CD8-positive, alpha-beta T cell (primary cell): ENCODE measurements at regions of chr20 and their contacts with region 1.

Region 1: GRCh38 chr20:41738604-41739206 is 120.5 kb upstream of the CHD6 start:
- DNase-seq: peak in 5 of 9 experiments; percentile 11 to 39 (median 28)
- ATAC-seq: no peak
- H3K4me3 ChIP-seq: no peak overlapping the region
- H3K4me3 Mint-ChIP-seq: no peak overlapping the region
- H3K27ac ChIP-seq: no peak overlapping the region
- H3K27ac Mint-ChIP-seq: no peak overlapping the region
- H3K4me1 ChIP-seq: no peaks in the 10 kb centered on the region
- H3K4me1 Mint-ChIP-seq: peaks cover 2% of the 10 kb centered on the region
- H3K27me3 ChIP-seq: no peaks in the 10 kb centered on the region
- H3K27me3 Mint-ChIP-seq: no peaks in the 10 kb centered on the region
- CTCF ChIP-seq: peak; percentile 54

Region 2: DNA sequence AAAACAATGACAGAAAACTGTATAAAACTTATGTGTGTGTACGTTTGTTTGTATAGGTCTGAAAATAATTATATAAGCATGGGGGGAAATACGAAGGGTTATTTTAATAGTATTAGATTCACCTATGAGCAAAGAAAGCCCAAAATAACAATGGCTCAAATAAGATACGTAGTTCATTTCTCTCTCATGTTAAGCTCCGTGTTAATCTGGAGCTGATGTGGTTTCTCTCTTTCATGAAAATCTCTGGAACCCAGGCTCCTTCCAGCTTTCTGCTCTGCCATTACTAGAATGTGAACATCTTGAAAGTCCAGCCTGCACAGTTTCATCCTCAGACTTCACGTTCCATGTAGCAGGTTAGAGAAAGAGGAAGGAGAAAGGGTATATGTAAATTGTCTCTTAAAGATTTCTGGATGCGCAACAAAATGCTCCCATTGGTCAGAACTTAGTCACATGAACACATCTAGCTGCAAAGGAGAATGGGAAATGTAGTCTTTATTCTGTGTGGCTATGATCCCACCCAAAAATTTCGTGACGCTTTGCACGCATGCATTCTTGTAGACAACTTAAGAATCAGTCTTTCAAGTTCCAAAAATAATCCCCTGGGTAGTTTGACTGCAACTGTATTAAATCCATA is 74.2 kb before region 1 on chr20:
- CTCF ChIA-PET with region 1: no interaction called
- POLR2A ChIA-PET with region 1: no interaction called
- intact Hi-C with region 1: no loop called
- DNase-seq: peak in 2 of 9 experiments; percentile 10 to 21
- ATAC-seq: no peak
- H3K4me3 ChIP-seq: no peak overlapping the region
- H3K4me3 Mint-ChIP-seq: no peak overlapping the region
- H3K27ac ChIP-seq: no peak overlapping the region
- H3K27ac Mint-ChIP-seq: no peak overlapping the region
- H3K4me1 ChIP-seq: no peaks in the 10 kb centered on the region
- H3K4me1 Mint-ChIP-seq: no peaks in the 10 kb centered on the region
- H3K27me3 ChIP-seq: peaks cover 0 to 4% of the 10 kb centered on the region in 2 experiments
- H3K27me3 Mint-ChIP-seq: peaks cover 31% of the 10 kb centered on the region
- CTCF ChIP-seq: no peak

Region 3: DNA sequence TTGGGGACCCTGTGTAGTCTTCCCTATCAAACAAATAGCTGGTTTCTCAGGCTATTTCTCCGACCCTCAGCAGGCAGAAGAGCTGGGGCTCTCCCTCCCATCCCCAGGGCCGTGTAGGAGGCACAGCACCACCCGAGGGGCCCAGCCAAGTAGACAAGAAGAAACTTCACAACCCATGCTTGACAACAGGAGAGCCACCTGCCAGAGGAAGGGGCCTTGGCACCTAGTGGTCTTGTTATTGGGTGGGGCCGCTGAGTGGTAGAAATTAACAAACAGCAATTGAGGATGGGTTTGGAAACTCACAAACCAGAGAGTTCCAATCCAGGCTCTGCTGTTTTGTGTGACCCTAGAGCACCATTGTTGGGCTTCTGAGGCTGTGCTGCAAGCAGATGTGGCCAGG is 12.0 kb before region 1 on chr20:
- CTCF ChIA-PET with region 1: interaction called, 12 read pairs
- POLR2A ChIA-PET with region 1: no interaction called
- intact Hi-C with region 1: no loop called
- DNase-seq: peak in 1 of 9 experiments; percentile 37
- ATAC-seq: no peak
- H3K4me3 ChIP-seq: no peak overlapping the region
- H3K4me3 Mint-ChIP-seq: no peak overlapping the region
- H3K27ac ChIP-seq: no peak overlapping the region
- H3K27ac Mint-ChIP-seq: no peak overlapping the region
- H3K4me1 ChIP-seq: no peaks in the 10 kb centered on the region
- H3K4me1 Mint-ChIP-seq: no peaks in the 10 kb centered on the region
- H3K27me3 ChIP-seq: no peaks in the 10 kb centered on the region
- H3K27me3 Mint-ChIP-seq: peaks cover 6% of the 10 kb centered on the region
- CTCF ChIP-seq: no peak

Region 4: DNA sequence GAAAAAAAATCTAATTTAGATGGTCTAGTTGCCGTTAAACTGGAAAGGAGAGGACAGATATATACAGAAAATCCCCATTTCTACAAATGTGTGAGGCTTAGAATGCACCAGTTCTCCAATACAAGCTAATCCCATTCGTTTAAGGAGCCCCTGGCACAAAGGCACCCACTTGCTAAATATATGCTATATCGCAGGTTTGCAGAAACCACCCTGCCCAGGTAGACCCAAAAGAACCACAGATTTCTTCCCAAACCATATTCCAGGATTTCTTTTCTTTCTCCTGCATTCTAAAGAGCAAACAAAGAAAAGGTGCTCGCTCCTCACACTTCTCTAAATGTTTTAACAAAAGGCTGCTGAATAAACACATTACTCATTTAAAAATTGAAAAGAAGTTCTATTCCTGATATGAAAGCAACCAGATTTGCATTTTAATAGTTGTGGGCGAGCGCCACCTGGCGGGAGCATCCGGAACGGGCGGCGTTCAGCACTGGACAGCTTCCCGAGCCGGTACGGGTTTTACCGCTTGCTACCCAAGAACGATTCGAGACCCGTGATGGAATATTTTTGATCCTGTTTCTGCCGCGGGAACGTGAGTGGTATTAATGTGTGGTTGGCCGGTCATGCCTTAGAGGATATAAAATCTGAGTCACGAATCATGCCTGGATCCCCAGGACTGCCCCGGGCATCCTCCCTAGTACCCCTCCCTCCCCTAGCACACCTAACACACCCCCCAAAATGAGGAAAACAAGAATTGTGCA is 1449.0 kb after region 1 on chr20:
- CTCF ChIA-PET with region 1: no interaction called
- POLR2A ChIA-PET with region 1: no interaction called
- intact Hi-C with region 1: loop called (anchors 5 to 10 kb)
- DNase-seq: peak in 8 of 9 experiments; percentile 10 to 55 (median 28)
- ATAC-seq: no peak
- H3K4me3 ChIP-seq: no peak overlapping the region
- H3K4me3 Mint-ChIP-seq: no peak overlapping the region
- H3K27ac ChIP-seq: no peak overlapping the region
- H3K27ac Mint-ChIP-seq: no peak overlapping the region
- H3K4me1 ChIP-seq: peaks cover 6% of the 10 kb centered on the region
- H3K4me1 Mint-ChIP-seq: peaks cover 6% of the 10 kb centered on the region
- H3K27me3 ChIP-seq: peaks cover 0 to 13% of the 10 kb centered on the region in 2 experiments
- H3K27me3 Mint-ChIP-seq: peaks cover 44% of the 10 kb centered on the region
- CTCF ChIP-seq: peak; percentile 64